CD8-positive, alpha-beta T cell (primary cell): ENCODE measurements at regions of chr3 and their contacts with region 1.

Region 1: DNA sequence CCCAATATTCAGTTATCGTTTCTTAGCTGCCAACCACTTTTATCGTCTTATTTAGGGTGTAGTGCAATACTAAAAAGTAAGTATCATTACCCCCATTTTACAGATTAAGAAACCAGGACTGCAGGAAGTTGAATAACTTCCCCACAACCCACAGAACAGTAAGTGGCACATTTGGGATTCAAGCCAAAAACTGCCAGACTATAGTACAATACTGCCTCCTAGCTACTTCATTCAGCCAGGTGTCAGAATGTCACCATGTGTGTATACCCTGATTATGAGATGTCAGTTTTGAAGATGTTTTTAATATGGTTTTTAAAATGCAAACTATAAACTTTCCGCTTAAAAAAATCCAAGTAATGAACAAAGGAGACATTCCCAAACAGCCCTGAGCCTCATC is 74.2 kb upstream of the PROK2 start:
- DNase-seq: peak in 2 of 9 experiments; percentile 65 to 75
- ATAC-seq: peak; percentile 75
- H3K4me3 ChIP-seq: no peak overlapping the region
- H3K4me3 Mint-ChIP-seq: no peak overlapping the region
- H3K27ac ChIP-seq: no peak overlapping the region
- H3K27ac Mint-ChIP-seq: no peak overlapping the region
- H3K4me1 ChIP-seq: no peaks in the 10 kb centered on the region
- H3K4me1 Mint-ChIP-seq: peaks cover 5% of the 10 kb centered on the region
- H3K27me3 ChIP-seq: peaks cover 0 to 4% of the 10 kb centered on the region in 2 experiments
- H3K27me3 Mint-ChIP-seq: peaks cover 24% of the 10 kb centered on the region
- CTCF ChIP-seq: peak; percentile 47

Region 2: GRCh38 chr3:71734883-71735282 is 124.2 kb before region 1 on chr3:
- CTCF ChIA-PET with region 1: interaction called, 25 read pairs
- POLR2A ChIA-PET with region 1: no interaction called
- intact Hi-C with region 1: loop called (anchors 1 to 5 kb)
- DNase-seq: no peak
- ATAC-seq: no peak
- H3K4me3 ChIP-seq: no peak overlapping the region
- H3K4me3 Mint-ChIP-seq: no peak overlapping the region
- H3K27ac ChIP-seq: no peak overlapping the region
- H3K27ac Mint-ChIP-seq: no peak overlapping the region
- H3K4me1 ChIP-seq: peaks cover 4% of the 10 kb centered on the region
- H3K4me1 Mint-ChIP-seq: peaks cover 14% of the 10 kb centered on the region
- H3K27me3 ChIP-seq: no peaks in the 10 kb centered on the region
- H3K27me3 Mint-ChIP-seq: peaks cover 4% of the 10 kb centered on the region
- CTCF ChIP-seq: no peak

Region 3: DNA sequence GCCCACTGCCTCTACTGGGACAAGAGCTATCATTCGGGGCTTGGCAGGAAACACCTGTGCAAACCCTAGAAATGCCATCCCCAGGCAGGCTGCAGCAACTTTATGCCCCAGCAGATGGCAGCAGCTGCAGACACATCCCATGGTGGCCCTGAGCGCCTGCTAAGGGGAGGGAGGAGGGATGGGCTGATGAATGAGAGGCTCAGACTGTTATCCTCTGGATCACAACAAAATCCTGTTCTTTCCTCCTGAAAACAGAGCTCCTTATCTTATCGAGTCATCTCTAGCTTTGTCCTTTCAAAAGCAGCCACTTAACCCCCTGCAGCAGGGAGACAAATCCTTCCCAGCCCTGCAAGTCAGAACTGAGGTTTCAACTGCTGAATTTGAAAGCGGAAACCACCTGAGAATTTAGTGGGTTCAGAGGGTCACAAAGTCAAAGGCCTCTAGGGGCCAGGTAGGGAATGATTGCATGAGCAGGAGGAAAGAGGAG is 16.4 kb after region 1 on chr3:
- CTCF ChIA-PET with region 1: interaction called, 17 read pairs
- POLR2A ChIA-PET with region 1: no interaction called
- intact Hi-C with region 1: no loop called
- DNase-seq: peak; percentile 60 to 84 (median 71)
- ATAC-seq: peak; percentile 99
- H3K4me3 ChIP-seq: no peak overlapping the region
- H3K4me3 Mint-ChIP-seq: no peak overlapping the region
- H3K27ac ChIP-seq: no peak overlapping the region
- H3K27ac Mint-ChIP-seq: no peak overlapping the region
- H3K4me1 ChIP-seq: no peaks in the 10 kb centered on the region
- H3K4me1 Mint-ChIP-seq: peaks cover 12% of the 10 kb centered on the region
- H3K27me3 ChIP-seq: no peaks in the 10 kb centered on the region
- H3K27me3 Mint-ChIP-seq: peaks cover 3% of the 10 kb centered on the region
- CTCF ChIP-seq: peak; percentile 86